GM12878 (cell line): ENCODE measurements at regions of chr3 and their contacts with region 1.

Region 1: GRCh38 chr3:190092250-190092649 is 28.4 kb downstream of the P3H2 start:
- DNase-seq: no peak
- ATAC-seq: no peak
- H3K4me3 ChIP-seq: no peak overlapping the region
- H3K27ac ChIP-seq: no peak overlapping the region
- H3K4me1 ChIP-seq: no peaks in the 10 kb centered on the region
- H3K27me3 ChIP-seq: no peaks in the 10 kb centered on the region
- CTCF ChIP-seq: no peak
- EP300 ChIP-seq: no peak
- POLR2A ChIP-seq: no peak
- RAD21 ChIP-seq: no peak

Region 2: DNA sequence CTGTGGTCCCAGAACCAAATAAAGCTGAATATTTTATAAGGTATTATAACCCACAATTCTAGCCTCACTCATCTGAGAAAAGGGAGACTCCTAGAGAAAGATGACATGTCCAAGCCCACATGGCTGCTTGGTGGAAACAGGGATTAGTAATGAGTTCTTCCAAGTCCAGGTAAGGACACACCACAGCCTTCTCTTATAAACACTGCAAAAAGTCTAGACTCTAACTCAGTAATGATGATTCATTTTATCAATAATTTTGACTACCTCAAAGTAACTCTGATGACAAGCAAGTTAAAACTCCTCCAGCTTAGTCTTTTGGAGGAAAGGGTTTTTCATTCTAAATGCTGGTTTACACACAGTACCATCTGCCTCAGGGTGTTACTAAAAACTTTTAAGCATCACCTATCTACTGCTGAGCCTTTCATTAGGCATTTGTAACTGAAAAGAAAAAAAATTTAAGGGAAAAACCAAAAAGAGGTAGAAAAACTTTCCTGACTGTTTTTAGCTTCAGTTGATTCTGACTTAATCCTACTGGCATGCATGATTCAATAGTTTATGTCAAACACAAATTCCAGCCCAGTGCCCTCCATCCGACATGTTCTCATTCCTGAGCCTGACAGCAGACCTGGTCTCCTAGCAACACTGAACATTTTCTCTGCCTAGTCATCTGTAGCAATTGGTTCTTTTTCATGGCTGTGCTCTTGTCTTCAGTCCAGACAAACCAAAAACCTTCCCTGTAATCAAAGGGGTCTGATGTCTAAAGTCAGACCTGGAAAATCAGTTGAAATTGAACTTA is 15.5 kb before region 1 on chr3:
- CTCF ChIA-PET with region 1: interaction called, 3 read pairs
- POLR2A ChIA-PET with region 1: interaction called, 3 read pairs
- RAD21 ChIA-PET with region 1: interaction called, 5 read pairs
- SMC1A ChIA-PET with region 1: interaction called, 17 read pairs
- in situ Hi-C with region 1: no loop called
- intact Hi-C with region 1: no loop called
- DNase-seq: no peak
- ATAC-seq: peak; percentile 31; the same call in 1 of the 3 replicates
- H3K4me3 ChIP-seq: no peak overlapping the region
- H3K27ac ChIP-seq: no peak overlapping the region
- H3K4me1 ChIP-seq: no peaks in the 10 kb centered on the region
- H3K27me3 ChIP-seq: no peaks in the 10 kb centered on the region
- CTCF ChIP-seq: no peak
- EP300 ChIP-seq: no peak
- POLR2A ChIP-seq: no peak
- RAD21 ChIP-seq: no peak

Region 3: GRCh38 chr3:190108804-190109203 is 16.6 kb after region 1 on chr3:
- CTCF ChIA-PET with region 1: no interaction called
- POLR2A ChIA-PET with region 1: interaction called, 9 read pairs
- RAD21 ChIA-PET with region 1: interaction called, 5 read pairs
- SMC1A ChIA-PET with region 1: interaction called, 14 read pairs
- in situ Hi-C with region 1: no loop called
- intact Hi-C with region 1: no loop called
- DNase-seq: no peak
- ATAC-seq: no peak
- H3K4me3 ChIP-seq: no peak overlapping the region
- H3K27ac ChIP-seq: no peak overlapping the region
- H3K4me1 ChIP-seq: no peaks in the 10 kb centered on the region
- H3K27me3 ChIP-seq: no peaks in the 10 kb centered on the region
- CTCF ChIP-seq: no peak
- EP300 ChIP-seq: no peak
- POLR2A ChIP-seq: no peak
- RAD21 ChIP-seq: no peak

Region 4: GRCh38 chr3:190169877-190170276 is 77.6 kb after region 1 on chr3:
- CTCF ChIA-PET with region 1: no interaction called
- POLR2A ChIA-PET with region 1: no interaction called
- RAD21 ChIA-PET with region 1: no interaction called
- SMC1A ChIA-PET with region 1: no interaction called
- in situ Hi-C with region 1: no loop called
- intact Hi-C with region 1: no loop called
- DNase-seq: no peak
- ATAC-seq: peak; percentile 82
- H3K4me3 ChIP-seq: no peak overlapping the region
- H3K27ac ChIP-seq: no peak overlapping the region; the same call in 1 of the 2 replicates
- H3K4me1 ChIP-seq: peaks cover 4% of the 10 kb centered on the region; the same call in 1 of the 2 replicates
- H3K27me3 ChIP-seq: no peaks in the 10 kb centered on the region
- CTCF ChIP-seq: no peak
- EP300 ChIP-seq: no peak
- POLR2A ChIP-seq: no peak
- RAD21 ChIP-seq: no peak